Caco-2 (cell line): ENCODE measurements at regions of chr6 and their contacts with region 1.

Region 1: DNA sequence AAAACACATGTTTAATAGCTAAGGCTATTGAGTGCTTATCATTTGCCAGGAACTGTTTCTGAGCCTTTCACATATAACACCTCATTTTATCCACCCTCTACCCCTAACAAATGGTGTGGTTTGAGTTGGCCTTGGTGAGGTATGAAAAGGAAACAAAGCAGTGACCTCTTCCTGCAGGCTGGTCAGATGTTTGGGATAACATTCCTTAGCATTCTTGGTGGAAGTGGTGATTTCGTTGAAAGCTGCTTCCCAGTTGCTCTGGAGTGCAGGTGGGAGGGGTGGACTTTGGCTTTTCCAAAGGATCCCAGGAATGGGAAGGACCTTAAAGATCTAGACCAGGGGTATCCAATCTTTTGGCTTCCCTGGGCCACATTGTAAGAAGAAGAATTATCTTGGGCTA is 41.3 kb downstream of the CARMIL1 start:
- DNase-seq: no peak
- H3K4me3 ChIP-seq: no peak overlapping the region
- H3K4me3 Mint-ChIP-seq: no peak overlapping the region
- H3K27ac Mint-ChIP-seq: no peak overlapping the region
- H3K4me1 ChIP-seq: peaks cover 44% of the 10 kb centered on the region
- H3K4me1 Mint-ChIP-seq: peaks cover 41% of the 10 kb centered on the region
- H3K27me3 ChIP-seq: no peaks in the 10 kb centered on the region
- H3K27me3 Mint-ChIP-seq: no peaks in the 10 kb centered on the region
- CTCF ChIP-seq: no peak

Region 2: GRCh38 chr6:25290306-25291060 is 30.0 kb before region 1 on chr6:
- CTCF ChIA-PET with region 1: interaction called, 10 read pairs
- POLR2A ChIA-PET with region 1: no interaction called
- intact Hi-C with region 1: no loop called
- DNase-seq: no peak
- H3K4me3 ChIP-seq: no peak overlapping the region
- H3K4me3 Mint-ChIP-seq: no peak overlapping the region
- H3K27ac Mint-ChIP-seq: no peak overlapping the region
- H3K4me1 ChIP-seq: no peaks in the 10 kb centered on the region
- H3K4me1 Mint-ChIP-seq: peaks cover 13% of the 10 kb centered on the region
- H3K27me3 ChIP-seq: no peaks in the 10 kb centered on the region
- H3K27me3 Mint-ChIP-seq: no peaks in the 10 kb centered on the region
- CTCF ChIP-seq: no peak

Region 3: GRCh38 chr6:25458485-25458884 is 138.0 kb after region 1 on chr6:
- CTCF ChIA-PET with region 1: no interaction called
- POLR2A ChIA-PET with region 1: no interaction called
- intact Hi-C with region 1: no loop called
- DNase-seq: no peak
- H3K4me3 ChIP-seq: no peak overlapping the region
- H3K4me3 Mint-ChIP-seq: no peak overlapping the region
- H3K27ac Mint-ChIP-seq: no peak overlapping the region
- H3K4me1 ChIP-seq: 0 out of 2 replicates have a peak, but pooled peaks cover 5% of the 10 kb centered on the region
- H3K4me1 Mint-ChIP-seq: no peaks in the 10 kb centered on the region
- H3K27me3 ChIP-seq: no peaks in the 10 kb centered on the region
- H3K27me3 Mint-ChIP-seq: no peaks in the 10 kb centered on the region
- CTCF ChIP-seq: no peak

Region 4: DNA sequence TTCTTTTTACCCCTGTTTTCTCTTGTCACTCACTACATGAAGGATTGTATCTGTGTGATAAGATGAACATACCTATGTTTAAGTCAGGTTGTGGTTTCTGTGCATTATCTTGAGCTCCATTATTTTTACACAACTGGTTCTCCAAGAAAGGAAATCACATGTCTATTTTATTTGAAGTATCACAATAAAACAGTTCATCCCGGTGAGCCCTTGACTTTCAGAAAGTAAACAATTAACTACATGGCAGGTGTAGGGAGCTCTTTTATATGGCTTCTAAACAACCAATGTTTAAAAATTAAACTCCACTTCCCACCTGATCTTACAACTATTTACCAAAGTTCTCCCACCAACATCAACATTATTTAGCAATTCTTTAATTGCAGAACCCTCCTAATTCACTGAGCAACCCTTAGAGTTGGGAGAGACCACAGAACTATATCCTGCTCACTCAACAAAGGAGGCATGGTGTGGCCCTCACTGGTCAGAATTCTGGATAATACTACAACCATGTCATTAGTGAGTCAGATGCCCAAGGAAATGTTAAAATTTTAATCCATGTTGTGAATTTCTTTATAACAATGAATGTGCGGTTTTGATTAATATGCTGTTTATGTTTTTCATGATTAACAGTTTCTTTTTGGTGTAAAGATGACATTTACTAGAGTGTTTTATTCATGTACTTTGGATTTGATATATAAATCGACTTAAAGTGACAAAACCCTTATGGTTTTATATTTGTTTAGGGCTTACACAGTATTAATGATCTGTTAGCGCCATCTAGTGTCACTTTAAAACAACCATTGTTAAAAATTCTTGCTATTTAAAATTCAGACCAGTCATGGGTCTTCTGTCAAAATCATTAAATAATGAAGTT is 281.6 kb after region 1 on chr6:
- CTCF ChIA-PET with region 1: no interaction called
- POLR2A ChIA-PET with region 1: no interaction called
- intact Hi-C with region 1: no loop called
- DNase-seq: peak in 1 of 2 experiments; percentile 18
- H3K4me3 ChIP-seq: no peak overlapping the region
- H3K4me3 Mint-ChIP-seq: no peak overlapping the region
- H3K27ac Mint-ChIP-seq: no peak overlapping the region
- H3K4me1 ChIP-seq: peaks cover 13% of the 10 kb centered on the region
- H3K4me1 Mint-ChIP-seq: peaks cover 15% of the 10 kb centered on the region
- H3K27me3 ChIP-seq: no peaks in the 10 kb centered on the region
- H3K27me3 Mint-ChIP-seq: no peaks in the 10 kb centered on the region
- CTCF ChIP-seq: peak; percentile 39 to 64